RWPE1 (cell line): ENCODE measurements at regions of chr16 and their contacts with region 1.

Region 1: DNA sequence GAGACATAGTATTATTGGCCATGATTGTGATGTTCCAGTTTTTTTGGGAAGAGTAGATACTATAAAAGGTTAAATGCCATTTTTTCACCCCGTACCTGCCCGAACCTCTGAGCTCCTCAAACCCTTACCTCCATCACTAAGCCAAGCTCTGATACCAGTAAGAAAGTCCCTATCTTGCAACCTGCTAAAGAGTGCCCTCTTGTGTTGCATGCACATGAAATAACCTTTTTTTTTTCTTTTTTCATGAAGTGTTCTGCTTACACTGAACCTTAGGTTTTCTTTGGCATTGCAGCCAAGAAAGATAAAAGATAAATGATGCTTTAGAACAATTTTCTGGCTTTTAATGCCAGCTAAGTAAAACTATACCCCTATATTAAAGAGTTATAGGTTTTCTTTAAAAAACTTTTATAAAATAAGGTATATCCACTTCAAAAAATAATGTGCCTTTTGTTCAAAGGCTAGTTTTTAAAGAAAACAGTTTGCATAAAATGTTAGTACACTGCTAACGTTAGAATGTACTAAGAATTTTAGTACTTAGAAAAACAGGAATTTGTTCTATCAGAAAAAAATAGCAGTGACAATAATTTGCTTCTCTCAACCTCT is 295.3 kb upstream of the PMFBP1 start:
- DNase-seq: peak; percentile 8
- H3K27ac ChIP-seq: no peak overlapping the region
- CTCF ChIP-seq: peak; percentile 65

Region 2: DNA sequence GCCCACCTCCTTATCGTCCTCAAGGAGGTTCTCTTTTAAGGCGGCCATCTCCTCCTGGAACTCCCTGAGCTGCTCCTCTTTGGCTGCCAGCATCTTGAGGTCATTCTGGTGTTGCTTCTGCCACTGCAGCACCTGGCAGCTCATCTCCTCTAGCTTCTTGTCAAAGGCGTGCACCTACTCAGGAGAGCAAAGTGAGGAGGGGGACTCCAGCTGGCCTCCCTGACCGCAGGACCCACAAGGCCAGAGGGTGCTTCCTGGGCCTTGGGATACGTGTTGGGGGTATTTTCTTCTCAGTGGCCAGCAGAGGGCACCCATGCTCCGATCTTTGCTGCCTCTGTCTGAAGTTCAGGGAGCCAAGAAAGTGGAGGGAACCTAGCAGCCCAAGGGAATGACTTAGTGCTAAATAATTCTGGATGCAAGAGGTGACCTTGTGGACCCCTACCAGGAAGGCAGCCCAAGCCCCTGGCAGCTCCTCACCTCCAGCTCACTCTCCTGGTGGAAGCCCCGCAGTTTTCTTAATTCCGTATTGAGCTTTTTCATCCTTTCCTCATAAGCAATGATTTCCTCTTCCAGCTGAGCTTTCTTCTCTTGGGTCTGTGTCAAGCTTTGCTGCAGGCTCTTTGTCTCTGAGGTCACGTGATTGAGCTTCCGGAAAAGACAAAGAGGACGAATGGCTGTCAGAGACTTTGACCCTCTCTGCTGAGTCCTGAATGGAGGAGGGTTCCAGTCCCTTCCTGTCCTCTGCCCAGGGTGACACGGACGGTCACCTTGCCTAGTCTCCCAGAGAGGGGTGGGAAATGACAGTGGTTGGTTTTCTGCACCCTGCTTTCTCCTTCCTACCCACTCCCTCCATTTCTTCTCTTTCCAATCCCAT is 342.3 kb before region 1 on chr16:
- CTCF ChIA-PET with region 1: interaction called, 16 read pairs
- POLR2A ChIA-PET with region 1: no interaction called
- DNase-seq: peak; percentile 66
- H3K27ac ChIP-seq: no peak overlapping the region
- CTCF ChIP-seq: peak; percentile 74

Region 3: GRCh38 chr16:72664509-72665225 is 197.4 kb after region 1 on chr16:
- CTCF ChIA-PET with region 1: no interaction called
- POLR2A ChIA-PET with region 1: no interaction called
- DNase-seq: peak; percentile 99
- H3K27ac ChIP-seq: peak overlapping the region; percentile 91
- CTCF ChIP-seq: no peak